Naive thymus-derived CD4-positive, alpha-beta T cell (primary cell): ENCODE measurements at regions of chr22 and their contacts with region 1.

Region 1: DNA sequence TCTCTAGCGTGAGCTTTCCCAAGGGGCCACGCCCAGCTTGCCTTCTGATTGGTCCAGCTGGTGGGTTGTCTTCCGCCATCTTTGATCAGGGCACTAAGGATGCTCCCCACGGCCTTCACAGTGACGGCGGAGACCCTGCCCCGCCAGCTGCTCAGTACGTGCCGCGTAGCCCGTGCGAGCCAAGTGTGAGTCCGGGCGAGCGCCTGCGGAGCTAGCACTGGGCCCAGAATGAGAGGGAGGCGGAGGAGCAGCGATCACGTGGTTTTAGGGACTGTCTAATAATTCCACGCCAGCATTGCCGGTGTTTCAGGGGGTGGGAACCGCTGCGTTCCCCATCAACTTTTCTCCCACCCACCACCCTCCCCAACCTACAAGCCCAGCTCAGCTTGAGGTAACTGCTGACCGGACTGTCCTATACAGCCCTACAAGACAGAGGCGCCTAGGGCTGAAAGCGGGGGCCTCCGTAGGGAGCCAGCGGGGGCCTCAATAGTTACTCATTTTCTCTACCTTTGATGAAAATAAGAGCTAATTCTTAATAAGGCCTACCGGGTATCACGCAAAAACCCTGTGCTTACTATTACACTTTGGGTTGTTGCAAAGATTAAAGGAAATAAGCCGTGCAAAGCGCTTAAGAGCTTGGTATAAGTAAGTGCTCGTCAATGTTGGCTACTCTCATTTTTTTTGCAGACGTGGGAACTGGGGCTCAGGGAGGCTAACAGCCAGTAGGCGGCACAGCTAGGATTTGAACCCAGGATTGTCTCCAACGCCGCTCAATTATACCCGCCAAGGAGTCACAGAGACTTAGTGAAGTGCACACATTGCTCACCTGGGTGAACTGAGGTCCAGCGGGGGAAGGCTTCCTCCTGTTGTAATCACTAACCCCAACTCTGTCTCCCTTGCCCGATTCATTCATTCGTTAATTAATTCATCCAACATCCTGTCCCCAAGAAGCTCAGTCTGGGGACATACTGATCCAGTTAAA is 1.3 kb upstream of the MTFP1 start:
- DNase-seq: peak; percentile 82 to 99 (median 98)
- ATAC-seq: peak; percentile 92
- H3K4me3 ChIP-seq: peak overlapping the region; percentile 76
- H3K4me3 Mint-ChIP-seq: peak overlapping the region; percentile 94 to 99 (median 98)
- H3K27ac ChIP-seq: peak overlapping the region; percentile 97
- H3K27ac Mint-ChIP-seq: peak overlapping the region; percentile 96 to 100 (median 98)
- H3K4me1 ChIP-seq: peaks cover 28 to 36% of the 10 kb centered on the region in 2 donors
- H3K4me1 Mint-ChIP-seq: peaks cover 30 to 71% (median 64%) of the 10 kb centered on the region in 7 donors
- H3K27me3 ChIP-seq: no peaks in the 10 kb centered on the region
- H3K27me3 Mint-ChIP-seq: peaks cover 0 to 4% (median 0%) of the 10 kb centered on the region in 5 donors

Region 2: DNA sequence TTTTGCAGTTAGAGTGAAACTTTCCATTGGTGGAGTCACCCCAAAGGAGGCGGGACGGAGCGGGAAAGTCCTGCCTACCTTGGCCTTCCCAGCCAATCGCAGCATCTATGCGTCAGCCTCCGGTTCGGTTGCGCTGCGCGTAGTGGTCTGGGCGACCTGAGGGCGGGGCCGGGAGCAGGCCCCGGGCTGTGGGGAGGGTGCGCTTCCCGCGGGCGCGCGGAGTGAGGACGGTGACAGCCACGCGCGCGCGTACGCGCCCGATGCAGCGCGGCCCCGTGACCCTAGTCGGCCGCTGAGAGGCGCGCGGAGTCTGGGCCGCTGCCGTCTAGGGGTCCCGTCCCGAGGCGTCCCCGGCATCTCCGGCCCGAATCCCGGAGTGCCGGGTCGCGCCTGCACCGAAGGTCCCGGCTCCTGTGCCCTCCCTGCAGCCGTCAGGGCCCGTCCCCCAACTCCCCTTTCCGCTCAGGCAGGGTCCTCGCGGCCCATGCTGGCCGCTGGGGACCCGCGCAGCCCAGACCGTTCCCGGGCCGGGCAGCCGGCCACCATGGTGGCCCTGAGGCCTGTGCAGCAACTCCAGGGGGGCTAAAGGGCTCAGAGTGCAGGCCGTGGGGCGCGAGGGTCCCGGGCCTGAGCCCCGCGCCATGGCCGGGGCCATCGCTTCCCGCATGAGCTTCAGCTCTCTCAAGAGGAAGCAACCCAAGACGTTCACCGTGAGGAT is 820.8 kb before region 1 on chr22 and contains the start of gene NF2:
- CTCF ChIA-PET with region 1: no interaction called
- POLR2A ChIA-PET with region 1: no interaction called
- intact Hi-C with region 1: loop called in 1 of 2 experiments (anchors 10 kb)
- DNase-seq: peak; percentile 96 to 99 (median 98)
- ATAC-seq: peak; percentile 98
- H3K4me3 ChIP-seq: peak within 1 kb of the TSS; percentile 92
- H3K4me3 Mint-ChIP-seq: peak within 1 kb of the TSS; percentile 85 to 98 (median 96)
- H3K27ac ChIP-seq: peak within 1 kb of the TSS; percentile 91
- H3K27ac Mint-ChIP-seq: peak within 1 kb of the TSS; percentile 91 to 99 (median 98)
- H3K4me1 ChIP-seq: peaks cover 11 to 16% of the 10 kb centered on the region in 2 donors
- H3K4me1 Mint-ChIP-seq: peaks cover 13 to 40% (median 28%) of the 10 kb centered on the region in 7 donors
- H3K27me3 ChIP-seq: no peaks in the 10 kb centered on the region
- H3K27me3 Mint-ChIP-seq: no peaks in the 10 kb centered on the region
- total RNA-seq, gene NF2: 27.6 to 56.3 (median 28.3) TPM

Region 3: DNA sequence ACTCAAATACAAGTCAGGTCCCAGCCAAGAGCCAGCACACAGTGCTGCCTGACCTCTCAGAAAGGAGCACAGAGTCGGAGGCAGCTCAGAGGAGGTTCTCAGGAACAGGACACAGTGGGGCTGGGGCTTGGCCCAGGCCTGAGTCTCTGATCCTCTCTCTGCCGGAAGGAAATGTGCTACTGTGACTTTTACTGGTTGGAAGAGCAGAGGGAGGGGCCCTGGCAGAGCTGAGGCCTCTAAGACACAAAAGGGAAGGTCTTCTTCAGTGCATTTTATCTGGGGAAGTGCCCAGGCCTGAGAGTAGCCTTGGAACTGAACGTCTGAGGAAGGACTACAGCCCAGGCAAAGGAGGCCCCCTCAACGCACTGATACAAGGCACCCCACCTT is 118.8 kb before region 1 on chr22:
- CTCF ChIA-PET with region 1: interaction called, 3 read pairs
- POLR2A ChIA-PET with region 1: interaction called, 8 read pairs
- intact Hi-C with region 1: loop called in 1 of 2 experiments (anchors 5 kb)
- DNase-seq: peak in 8 of 9 donors; percentile 56 to 75 (median 68)
- ATAC-seq: peak; percentile 67
- H3K4me3 ChIP-seq: peak overlapping the region; percentile 51
- H3K4me3 Mint-ChIP-seq: peak overlapping the region; percentile 69 to 97 (median 84)
- H3K27ac ChIP-seq: peak overlapping the region; percentile 75
- H3K27ac Mint-ChIP-seq: peak overlapping the region; percentile 87 to 99 (median 97)
- H3K4me1 ChIP-seq: peaks cover 96 to 98% of the 10 kb centered on the region in 2 donors
- H3K4me1 Mint-ChIP-seq: peaks cover 82 to 100% (median 93%) of the 10 kb centered on the region in 7 donors
- H3K27me3 ChIP-seq: no peaks in the 10 kb centered on the region
- H3K27me3 Mint-ChIP-seq: no peaks in the 10 kb centered on the region

Region 4: DNA sequence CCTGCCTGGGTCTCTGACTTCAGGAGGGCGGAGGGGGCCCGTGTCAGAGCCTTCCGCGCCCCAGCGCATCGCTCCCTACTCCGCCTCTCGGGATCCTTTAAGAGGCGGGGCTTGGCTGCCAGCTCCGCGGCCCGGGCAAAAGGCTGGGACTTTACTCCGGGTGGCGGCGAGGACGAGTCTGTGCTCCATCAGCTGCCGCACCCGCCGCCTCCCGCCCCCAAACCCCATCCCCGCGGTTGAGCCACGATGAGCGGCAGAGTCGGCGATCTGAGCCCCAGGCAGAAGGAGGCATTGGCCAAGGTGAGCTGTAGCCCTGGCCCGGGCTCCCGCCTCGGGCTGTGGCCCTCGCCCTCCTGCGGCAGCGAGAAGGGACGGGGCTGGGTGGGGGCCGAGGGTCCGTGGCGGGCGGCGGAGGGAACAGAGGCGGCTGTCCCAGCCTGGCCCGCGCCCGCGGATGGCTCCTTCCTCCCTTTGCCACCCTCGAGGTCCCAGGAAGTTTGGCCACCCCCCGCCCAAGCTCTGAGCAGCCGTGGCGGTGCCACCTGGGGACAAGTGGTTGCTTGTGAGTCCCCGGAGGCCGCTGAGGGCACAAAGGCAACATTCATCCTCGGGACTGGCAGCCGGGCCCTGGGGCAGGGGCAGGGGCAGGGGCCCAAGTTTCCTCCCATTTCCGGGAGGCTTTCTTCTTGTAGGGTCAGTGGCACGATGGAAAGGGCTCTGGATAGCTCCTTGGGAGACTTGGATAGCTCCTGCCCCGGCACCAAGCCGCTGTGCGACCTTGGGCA is 27.2 kb before region 1 on chr22 and contains the start of gene SEC14L2:
- CTCF ChIA-PET with region 1: interaction called, 78 read pairs
- POLR2A ChIA-PET with region 1: interaction called, 158 read pairs
- intact Hi-C with region 1: loop called (anchors 1 kb)
- DNase-seq: peak; percentile 26 to 73 (median 50)
- ATAC-seq: peak; percentile 81
- H3K4me3 ChIP-seq: peak within 1 kb of the TSS; percentile 71
- H3K4me3 Mint-ChIP-seq: peak within 1 kb of the TSS; percentile 85 to 95 (median 90)
- H3K27ac ChIP-seq: peak within 1 kb of the TSS; percentile 77
- H3K27ac Mint-ChIP-seq: peak within 1 kb of the TSS; percentile 77 to 94 (median 91)
- H3K4me1 ChIP-seq: peaks cover 12 to 22% of the 10 kb centered on the region in 2 donors
- H3K4me1 Mint-ChIP-seq: peaks cover 29 to 69% (median 46%) of the 10 kb centered on the region in 7 donors
- H3K27me3 ChIP-seq: no peaks in the 10 kb centered on the region
- H3K27me3 Mint-ChIP-seq: peaks cover 0 to 5% (median 0%) of the 10 kb centered on the region in 5 donors
- total RNA-seq, gene SEC14L2: 10.7 to 147 (median 16.5) TPM

Region 5: DNA sequence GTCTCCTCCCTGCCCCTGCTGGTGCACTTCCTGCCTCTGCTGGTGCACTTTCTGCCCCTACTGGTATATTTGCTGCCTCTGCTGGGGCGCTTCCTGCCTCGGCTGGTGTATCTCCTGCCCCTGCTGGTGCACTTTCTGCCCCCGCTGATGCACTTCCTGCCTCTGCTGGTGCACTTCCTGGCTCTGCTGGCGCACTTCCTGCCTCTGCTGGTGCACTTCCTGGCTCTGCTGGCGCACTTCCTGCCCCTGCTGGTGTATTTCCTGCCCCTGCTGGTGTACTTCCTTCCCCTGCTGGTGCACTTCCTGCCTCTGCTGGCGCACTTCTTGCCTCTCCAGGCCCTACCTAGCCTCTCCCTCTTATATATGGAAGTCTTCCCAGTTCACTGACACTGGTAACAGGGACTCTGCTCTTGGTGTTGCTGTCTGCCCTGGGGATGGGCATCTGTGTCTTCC is 11.4 kb after region 1 on chr22:
- CTCF ChIA-PET with region 1: interaction called, 46 read pairs
- POLR2A ChIA-PET with region 1: interaction called, 88 read pairs
- intact Hi-C with region 1: loop called (anchors 1 kb)
- DNase-seq: peak; percentile 45 to 97 (median 92)
- ATAC-seq: peak; percentile 94
- H3K4me3 ChIP-seq: peak overlapping the region; percentile 53
- H3K4me3 Mint-ChIP-seq: peak overlapping the region; percentile 57 to 90 (median 83)
- H3K27ac ChIP-seq: peak overlapping the region; percentile 99
- H3K27ac Mint-ChIP-seq: peak overlapping the region; percentile 88 to 100 (median 98)
- H3K4me1 ChIP-seq: peaks cover 16 to 21% of the 10 kb centered on the region in 2 donors
- H3K4me1 Mint-ChIP-seq: peaks cover 10 to 26% (median 23%) of the 10 kb centered on the region in 7 donors
- H3K27me3 ChIP-seq: peaks cover 3 to 6% of the 10 kb centered on the region in 2 donors
- H3K27me3 Mint-ChIP-seq: peaks cover 12 to 24% (median 18%) of the 10 kb centered on the region in 5 donors

Region 6: DNA sequence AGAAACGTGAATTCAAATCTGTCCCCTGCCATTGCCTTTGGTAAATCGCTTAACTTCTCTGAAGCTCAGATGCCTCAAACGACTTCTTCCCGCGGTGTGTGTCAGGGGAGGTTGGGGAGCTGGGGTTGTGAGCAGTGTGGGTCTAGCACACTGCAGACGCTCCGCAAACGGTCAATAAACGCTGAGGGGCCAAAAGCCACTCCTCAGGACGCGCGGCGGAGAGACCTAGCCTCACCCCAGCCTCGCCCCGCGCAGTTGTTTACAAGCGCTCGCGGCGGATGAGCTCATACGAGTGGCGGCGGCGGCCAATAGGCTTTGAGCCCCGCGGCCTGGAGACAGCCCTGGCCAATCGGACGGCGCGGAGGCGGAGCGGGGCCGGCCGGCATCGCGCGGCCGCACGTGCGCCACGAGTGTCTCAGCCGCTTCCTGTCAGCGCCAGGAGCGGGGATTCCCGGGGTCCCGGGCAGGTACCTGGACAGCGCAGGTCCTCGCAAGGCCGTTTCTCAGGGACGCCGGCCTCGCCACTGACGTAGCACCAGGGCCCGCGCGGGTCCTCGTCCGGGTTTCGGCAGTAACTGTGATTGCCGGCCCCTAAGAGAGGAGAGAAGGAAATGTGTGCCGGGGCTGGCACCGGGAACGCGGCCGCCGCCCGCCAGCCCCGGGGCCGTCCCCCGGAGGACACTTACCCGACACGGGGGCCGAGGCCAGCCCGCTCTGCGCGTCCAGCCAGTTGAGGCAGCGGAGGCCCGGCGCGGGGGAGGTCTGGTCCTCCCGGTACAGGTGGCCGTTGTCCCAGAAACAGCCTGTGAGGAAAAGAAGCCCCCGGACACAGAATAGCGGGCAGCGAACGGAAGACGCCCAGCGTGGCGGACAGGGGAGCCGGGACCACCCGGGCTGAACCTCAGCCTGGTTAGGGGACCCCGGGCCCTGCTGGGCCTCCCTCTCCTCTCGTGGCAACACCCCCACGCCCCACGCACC is 866.5 kb after region 1 on chr22:
- CTCF ChIA-PET with region 1: no interaction called
- POLR2A ChIA-PET with region 1: interaction called, 3 read pairs
- intact Hi-C with region 1: loop called in 1 of 2 experiments (anchors 10 kb)
- DNase-seq: peak; percentile 94 to 98 (median 97)
- ATAC-seq: peak; percentile 86
- H3K4me3 ChIP-seq: peak overlapping the region; percentile 100
- H3K4me3 Mint-ChIP-seq: peak overlapping the region; percentile 92 to 100 (median 98)
- H3K27ac ChIP-seq: peak overlapping the region; percentile 100
- H3K27ac Mint-ChIP-seq: peak overlapping the region; percentile 98 to 100 (median 99)
- H3K4me1 ChIP-seq: peaks cover 53 to 54% of the 10 kb centered on the region in 2 donors
- H3K4me1 Mint-ChIP-seq: peaks cover 24 to 65% (median 60%) of the 10 kb centered on the region in 7 donors
- H3K27me3 ChIP-seq: no peaks in the 10 kb centered on the region
- H3K27me3 Mint-ChIP-seq: no peaks in the 10 kb centered on the region